Dendritic cell treated with granulocyte-macrophage colony-stimulating factor and Interleukin-4, amounts not matched to agents 40 ng/mL and 50 ng/mL, for 4 days (primary cell): ENCODE measurements at regions of chr5 and their contacts with region 1.

Region 1: DNA sequence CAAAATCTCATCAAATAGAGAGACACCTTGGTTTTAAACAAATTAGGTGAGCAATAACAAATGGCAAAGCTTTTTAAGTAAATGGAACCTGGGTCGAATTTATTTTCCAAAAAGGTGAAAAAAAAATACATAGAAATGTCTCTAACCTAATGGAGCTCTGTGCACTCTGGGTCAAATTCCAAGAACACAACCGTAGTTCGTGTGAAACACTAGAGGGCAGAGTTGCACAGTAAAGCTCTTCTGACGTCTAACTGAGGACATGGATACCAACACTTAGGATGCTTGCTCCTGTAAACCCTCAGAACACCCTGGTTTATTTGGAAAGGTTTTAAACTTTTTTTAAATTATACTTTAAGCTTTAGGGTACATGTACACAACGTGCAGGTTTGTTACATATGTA is 18.9 kb downstream of the MARCHF11 start:
- H3K4me3 Mint-ChIP-seq: no peak overlapping the region
- H3K27ac Mint-ChIP-seq: no peak overlapping the region
- H3K4me1 Mint-ChIP-seq: no peaks in the 10 kb centered on the region
- H3K27me3 Mint-ChIP-seq: no peaks in the 10 kb centered on the region

Region 2: DNA sequence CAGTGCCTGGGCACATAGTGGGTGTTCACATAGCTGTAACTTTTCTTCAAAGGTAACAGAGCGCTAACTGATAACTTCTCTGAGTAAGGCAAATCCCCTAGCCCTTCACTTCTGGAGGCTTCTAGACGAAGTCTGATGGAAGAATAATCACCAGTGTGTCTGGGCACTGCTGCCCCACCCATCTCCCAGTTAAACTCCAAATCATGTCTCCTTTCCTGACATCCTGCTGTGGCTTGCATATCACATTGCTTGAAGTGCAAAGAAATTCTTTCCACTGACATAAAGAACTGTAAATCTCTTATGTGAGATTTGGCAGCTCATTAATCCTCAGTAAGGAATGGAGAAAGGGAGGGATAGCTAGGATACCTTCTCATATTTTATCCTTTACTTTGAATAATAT is 55.8 kb before region 1 on chr5:
- intact Hi-C with region 1: no loop called
- H3K4me3 Mint-ChIP-seq: no peak overlapping the region
- H3K27ac Mint-ChIP-seq: no peak overlapping the region
- H3K4me1 Mint-ChIP-seq: no peaks in the 10 kb centered on the region
- H3K27me3 Mint-ChIP-seq: no peaks in the 10 kb centered on the region

Region 3: DNA sequence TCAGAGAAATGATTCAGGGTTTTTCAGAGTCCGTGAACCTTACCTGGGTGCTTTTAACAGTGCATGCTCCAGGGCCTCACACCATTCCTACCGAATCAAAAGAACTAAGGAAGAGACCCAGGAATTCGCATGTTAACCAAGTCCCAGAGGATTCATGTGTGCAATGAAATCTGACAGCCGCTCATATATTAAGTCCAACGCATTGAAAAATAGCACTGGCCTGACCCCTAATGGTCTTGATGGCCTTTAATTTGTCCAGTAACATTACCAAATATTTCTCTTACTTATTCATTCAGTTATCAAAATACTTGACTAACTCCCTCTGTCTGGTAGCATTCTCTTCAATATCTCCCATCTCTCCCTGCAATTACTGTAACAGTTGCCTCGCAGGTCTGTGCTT is 73.9 kb after region 1 on chr5:
- intact Hi-C with region 1: no loop called
- H3K4me3 Mint-ChIP-seq: no peak overlapping the region
- H3K27ac Mint-ChIP-seq: no peak overlapping the region
- H3K4me1 Mint-ChIP-seq: no peaks in the 10 kb centered on the region
- H3K27me3 Mint-ChIP-seq: no peaks in the 10 kb centered on the region

Region 4: DNA sequence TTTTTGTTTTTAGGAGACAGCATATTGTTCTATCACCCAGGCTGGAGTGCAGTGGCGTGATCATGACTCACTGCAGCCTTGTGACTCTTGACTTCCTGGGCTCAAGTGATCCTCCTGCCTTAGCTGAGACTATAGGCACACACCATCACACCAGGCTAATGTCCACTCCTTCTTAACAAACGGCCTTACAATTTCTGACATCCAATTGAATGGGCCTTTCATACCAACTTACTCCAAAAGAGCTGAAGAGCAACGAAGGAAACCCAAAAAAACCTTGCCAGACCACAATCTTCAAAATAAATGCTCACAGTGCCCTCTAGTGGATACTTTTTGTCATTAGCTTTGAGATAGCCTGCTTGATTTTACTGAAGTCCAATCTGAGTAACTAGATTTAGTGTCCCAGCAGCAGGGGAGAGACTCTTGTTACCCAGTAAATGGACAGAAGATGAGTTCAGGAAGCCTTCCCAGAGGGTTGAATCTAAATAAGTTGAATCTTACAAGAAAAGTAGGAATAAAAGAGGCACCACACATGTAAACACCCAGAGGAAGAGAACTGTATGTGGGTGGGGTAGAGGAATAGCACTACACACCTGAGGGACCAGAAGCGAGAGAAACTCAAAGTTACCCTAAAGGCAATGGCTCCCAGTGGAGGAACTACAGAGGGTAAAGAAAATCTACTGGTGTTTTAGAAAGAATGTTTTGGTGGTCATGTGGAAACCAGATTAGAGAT is 295.6 kb after region 1 on chr5:
- intact Hi-C with region 1: loop called (anchors 5 kb)
- H3K4me3 Mint-ChIP-seq: peak overlapping the region; percentile 10
- H3K27ac Mint-ChIP-seq: peak overlapping the region; percentile 82
- H3K4me1 Mint-ChIP-seq: peaks cover 42% of the 10 kb centered on the region
- H3K27me3 Mint-ChIP-seq: no peaks in the 10 kb centered on the region

Region 5: DNA sequence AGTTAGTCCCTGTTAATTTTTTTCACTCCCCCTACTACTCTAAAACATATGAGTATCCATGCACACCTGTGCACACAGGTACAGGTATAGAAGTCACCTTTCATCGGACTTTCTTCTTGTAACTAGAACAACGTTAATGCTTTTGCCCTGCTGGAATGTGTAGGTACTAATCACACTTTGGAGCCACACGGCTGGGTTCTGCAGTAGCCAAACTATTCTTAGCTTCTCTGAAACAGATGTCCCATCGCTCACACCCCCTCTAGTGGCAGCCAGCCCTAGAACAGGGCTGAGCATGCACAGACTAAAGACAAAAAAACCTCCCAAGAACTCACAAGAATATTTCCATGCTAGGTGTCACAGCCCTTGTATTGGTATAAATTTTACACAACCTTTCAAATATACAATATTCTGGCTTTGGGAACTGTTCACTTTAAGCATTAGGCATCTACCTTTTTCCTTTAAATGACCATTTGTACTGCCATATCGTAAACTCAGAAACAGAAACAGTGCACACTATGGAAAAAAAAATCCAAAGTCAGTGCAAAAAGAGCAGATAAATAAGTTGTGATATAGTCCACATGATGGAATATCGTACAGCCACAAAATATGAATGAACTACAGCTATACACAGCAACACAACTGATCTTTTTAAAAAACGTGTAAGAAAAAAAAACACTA is 392.1 kb after region 1 on chr5:
- intact Hi-C with region 1: loop called (anchors 5 kb)
- H3K4me3 Mint-ChIP-seq: no peak overlapping the region
- H3K27ac Mint-ChIP-seq: no peak overlapping the region
- H3K4me1 Mint-ChIP-seq: no peaks in the 10 kb centered on the region
- H3K27me3 Mint-ChIP-seq: no peaks in the 10 kb centered on the region